Dendritic cell treated with granulocyte-macrophage colony-stimulating factor and Interleukin-4, amounts not matched to agents 40 ng/mL and 50 ng/mL, for 4 days (primary cell): ENCODE measurements at regions of chr12 and their contacts with region 1.

Region 1: DNA sequence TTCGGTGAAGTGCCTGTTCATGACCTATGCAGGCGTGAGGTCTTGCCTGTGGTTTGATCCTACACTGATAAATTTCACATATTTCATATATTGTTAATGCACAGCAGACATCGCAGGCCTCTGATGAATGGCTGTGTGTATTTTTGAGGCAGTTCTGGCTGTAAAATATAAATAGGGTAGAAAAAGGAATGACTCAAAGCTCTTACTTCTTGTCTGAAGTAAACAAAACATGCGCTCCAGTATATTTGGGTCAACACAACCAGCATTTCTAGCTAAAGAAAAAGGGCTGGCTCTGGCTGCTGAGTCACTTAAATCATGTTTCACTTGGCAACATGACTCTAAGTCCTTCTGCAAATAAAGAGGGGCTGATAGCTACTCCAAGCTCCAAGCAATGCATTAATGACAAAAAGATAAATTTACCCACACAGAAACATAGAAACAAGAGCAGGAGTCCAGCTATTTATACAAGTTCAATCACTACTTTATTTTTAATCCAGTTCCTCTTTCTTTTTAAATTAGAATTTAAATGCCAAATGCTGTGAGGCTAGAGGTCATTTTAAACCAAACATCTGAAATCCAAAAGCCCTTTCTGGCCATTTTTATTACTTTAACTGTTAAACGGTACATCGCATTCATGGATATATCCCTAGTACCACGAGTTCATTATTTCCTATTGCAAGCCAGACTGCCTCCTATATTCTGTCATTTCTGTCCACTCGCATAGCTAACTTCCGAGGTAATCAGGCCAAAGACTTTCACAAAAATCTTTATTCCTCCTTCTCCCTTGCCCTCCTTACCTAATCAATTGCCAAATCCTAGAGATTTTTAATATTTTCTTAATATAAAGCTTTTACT is 54.3 kb upstream of the TMCC3 start:
- H3K4me3 Mint-ChIP-seq: no peak overlapping the region
- H3K27ac Mint-ChIP-seq: no peak overlapping the region
- H3K4me1 Mint-ChIP-seq: peaks cover 9% of the 10 kb centered on the region
- H3K27me3 Mint-ChIP-seq: peaks cover 19% of the 10 kb centered on the region

Region 2: DNA sequence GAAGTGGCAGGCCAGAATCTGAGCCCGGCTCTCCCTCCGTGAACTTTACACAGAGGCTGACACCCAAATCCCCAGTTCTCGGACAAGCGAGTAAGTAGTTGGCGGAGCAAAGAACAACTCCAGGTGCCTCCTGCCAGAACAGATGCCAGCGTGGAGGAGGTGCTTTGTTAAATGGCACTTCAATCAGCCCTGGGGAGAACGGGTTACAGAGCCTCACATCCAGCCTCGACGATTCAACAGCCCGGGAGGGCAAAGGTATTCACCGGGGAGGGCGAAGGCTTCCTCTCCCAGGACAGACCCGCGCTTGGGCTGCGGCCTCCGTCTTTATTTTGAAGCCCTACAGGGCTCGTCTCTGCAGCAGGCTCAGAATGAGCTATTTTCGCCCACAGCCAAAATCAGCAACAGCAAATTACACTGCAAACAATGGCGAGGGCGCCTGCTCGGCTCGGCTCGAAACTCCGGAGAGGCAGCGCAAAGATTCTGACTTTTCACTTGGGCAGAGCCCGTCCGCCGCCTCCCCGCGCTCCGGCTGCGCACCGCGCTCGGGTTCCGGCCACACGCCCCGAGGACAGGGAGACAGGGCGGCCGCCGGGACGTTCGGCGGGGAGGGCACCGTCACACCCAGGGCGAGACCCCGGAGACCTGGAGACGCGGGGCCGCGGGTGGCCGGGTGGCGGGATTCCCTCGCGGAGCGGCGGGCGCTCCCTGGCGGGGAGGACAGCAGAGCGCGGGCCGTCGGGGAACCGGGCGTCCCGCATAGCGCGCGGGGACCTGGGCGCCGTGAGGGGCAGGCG is 55.1 kb before region 1 on chr12:
- intact Hi-C with region 1: loop called (anchors 10 kb)
- H3K4me3 Mint-ChIP-seq: peak overlapping the region; percentile 83
- H3K27ac Mint-ChIP-seq: peak overlapping the region; percentile 74
- H3K4me1 Mint-ChIP-seq: peaks cover 29% of the 10 kb centered on the region
- H3K27me3 Mint-ChIP-seq: peaks cover 60% of the 10 kb centered on the region

Region 3: DNA sequence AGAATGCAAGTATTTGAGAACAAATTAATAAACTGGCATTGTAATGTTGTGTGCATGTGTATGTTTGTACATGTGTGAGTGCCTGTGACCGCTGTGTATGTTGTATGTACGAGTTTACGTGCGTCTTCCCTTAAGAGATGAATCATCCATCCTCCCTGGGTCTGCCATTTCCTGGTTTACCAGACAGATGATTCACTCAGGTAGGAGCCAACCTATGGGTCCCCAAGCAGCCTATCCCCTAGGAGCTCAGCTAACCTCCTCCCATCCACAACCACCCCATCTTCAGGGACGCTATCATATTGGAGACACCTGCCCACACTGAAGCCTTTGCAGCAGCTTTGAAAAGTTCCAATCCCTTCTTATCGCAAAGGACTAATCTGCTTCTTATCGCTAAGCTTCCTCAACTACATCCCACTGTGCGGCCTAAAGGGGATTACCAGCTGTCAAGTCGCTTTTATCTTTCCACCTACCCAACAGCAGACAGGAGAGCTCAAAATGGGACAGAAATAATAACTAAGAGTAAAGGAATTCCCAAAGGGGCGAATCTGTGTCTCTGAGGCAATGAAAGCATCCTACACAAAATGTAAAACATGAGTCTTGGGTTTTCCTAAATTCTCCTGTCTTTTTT is 27.2 kb after region 1 on chr12:
- intact Hi-C with region 1: no loop called
- H3K4me3 Mint-ChIP-seq: no peak overlapping the region
- H3K27ac Mint-ChIP-seq: no peak overlapping the region
- H3K4me1 Mint-ChIP-seq: no peaks in the 10 kb centered on the region
- H3K27me3 Mint-ChIP-seq: peaks cover 10% of the 10 kb centered on the region